PC-9 (cell line): ENCODE measurements at regions of chr11 and their contacts with region 1.

Region 1: GRCh38 chr11:66835768-66836405 is 7.4 kb upstream of the RCE1 start:
- DNase-seq: no peak
- H3K4me3 ChIP-seq: no peak overlapping the region
- H3K27ac ChIP-seq: no peak overlapping the region
- H3K4me1 ChIP-seq: peaks cover 9% of the 10 kb centered on the region
- H3K27me3 ChIP-seq: no peaks in the 10 kb centered on the region
- CTCF ChIP-seq: no peak

Region 2: DNA sequence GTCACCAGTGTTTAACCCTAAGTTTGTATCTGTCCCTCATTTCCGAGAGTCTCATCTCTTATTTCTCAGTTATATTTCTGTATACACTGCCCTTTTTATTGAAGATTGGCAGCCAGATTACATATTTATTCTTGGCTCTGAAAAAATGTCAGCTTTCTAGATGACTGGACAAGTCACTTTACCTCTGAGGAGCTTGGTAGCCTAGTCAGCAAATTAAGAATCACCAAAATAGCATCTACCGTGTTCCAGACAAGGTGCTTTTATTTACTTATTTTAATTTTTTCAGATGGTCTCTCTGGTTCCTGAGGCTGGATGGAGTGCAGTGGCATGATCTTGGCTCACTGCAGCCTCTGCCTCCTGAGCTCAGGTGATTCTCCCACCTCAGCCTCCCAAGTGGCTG is 202.9 kb before region 1 on chr11:
- CTCF ChIA-PET with region 1: interaction called, 30 read pairs
- POLR2A ChIA-PET with region 1: no interaction called
- intact Hi-C with region 1: no loop called
- DNase-seq: no peak
- H3K4me3 ChIP-seq: no peak overlapping the region
- H3K27ac ChIP-seq: no peak overlapping the region
- H3K4me1 ChIP-seq: peaks cover 3% of the 10 kb centered on the region; the same call in 1 of the 2 replicates
- H3K27me3 ChIP-seq: no peaks in the 10 kb centered on the region
- CTCF ChIP-seq: no peak